OCI-LY7 (cell line): ENCODE measurements at regions of chr2 and their contacts with region 1.

Region 1: DNA sequence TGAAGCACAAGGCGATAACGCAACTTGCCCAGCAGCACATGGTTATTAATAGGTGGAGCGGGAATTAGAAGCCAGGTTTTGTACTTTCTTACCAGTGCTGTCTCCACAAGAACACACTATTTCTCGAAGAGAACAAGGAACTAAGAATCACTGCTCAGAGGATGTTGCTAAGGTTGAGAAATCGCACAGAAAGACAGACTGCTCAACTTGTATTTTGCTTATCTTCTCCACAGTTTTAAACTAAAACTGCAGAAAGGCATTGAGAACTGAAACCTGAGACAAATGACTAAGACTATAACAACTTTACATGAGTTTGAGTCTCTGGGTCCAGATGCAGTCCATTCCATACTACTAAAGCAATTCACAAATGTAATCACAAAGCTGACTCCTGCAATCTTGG is 6.2 kb downstream of the PRKD3 start:
- DNase-seq: peak; percentile 71
- H3K4me3 ChIP-seq: peak overlapping the region; percentile 98
- H3K27ac ChIP-seq: peak overlapping the region; percentile 74
- H3K4me1 ChIP-seq: peaks cover 89% of the 10 kb centered on the region
- CTCF ChIP-seq: no peak

Region 2: GRCh38 chr2:37297632-37298031 is 20.8 kb before region 1 on chr2:
- CTCF ChIA-PET with region 1: no interaction called
- POLR2A ChIA-PET with region 1: interaction called, 10 read pairs
- intact Hi-C with region 1: no loop called
- DNase-seq: no peak
- H3K4me3 ChIP-seq: no peak overlapping the region
- H3K27ac ChIP-seq: no peak overlapping the region
- H3K4me1 ChIP-seq: peaks cover 11% of the 10 kb centered on the region
- CTCF ChIP-seq: no peak

Region 3: GRCh38 chr2:37306024-37306423 is 12.4 kb before region 1 on chr2:
- CTCF ChIA-PET with region 1: interaction called, 3 read pairs
- POLR2A ChIA-PET with region 1: interaction called, 30 read pairs
- intact Hi-C with region 1: no loop called
- DNase-seq: no peak
- H3K4me3 ChIP-seq: no peak overlapping the region
- H3K27ac ChIP-seq: peak overlapping the region; percentile 13
- H3K4me1 ChIP-seq: peaks cover 32% of the 10 kb centered on the region
- CTCF ChIP-seq: no peak

Region 4: GRCh38 chr2:37330681-37331080 is 12.3 kb after region 1 on chr2:
- CTCF ChIA-PET with region 1: no interaction called
- POLR2A ChIA-PET with region 1: interaction called, 365 read pairs
- intact Hi-C with region 1: no loop called
- DNase-seq: no peak
- H3K4me3 ChIP-seq: no peak overlapping the region
- H3K27ac ChIP-seq: no peak overlapping the region
- H3K4me1 ChIP-seq: peaks cover 50% of the 10 kb centered on the region
- CTCF ChIP-seq: no peak

Region 5: GRCh38 chr2:37337642-37338310 is 19.4 kb after region 1 on chr2:
- CTCF ChIA-PET with region 1: interaction called, 3 read pairs
- POLR2A ChIA-PET with region 1: interaction called, 365 read pairs
- intact Hi-C with region 1: loop called (anchors 1 kb)
- DNase-seq: peak; percentile 35
- H3K4me3 ChIP-seq: peak overlapping the region; percentile 49
- H3K27ac ChIP-seq: peak overlapping the region; percentile 74
- H3K4me1 ChIP-seq: peaks cover 76% of the 10 kb centered on the region
- CTCF ChIP-seq: no peak